ENCODE measurements at regions of chr11 and their contacts with region 1.

Region 1: GRCh38 chr11:125887373-125888324 is at the start of gene HYLS1:
- DNase-seq: peak; percentile 90 to 100 (median 94)
- ATAC-seq: peak; percentile 95
- H3K4me3 ChIP-seq: peak within 1 kb of the TSS; percentile 86
- H3K4me3 Mint-ChIP-seq: peak within 1 kb of the TSS; percentile 87 to 98 (median 96)
- H3K27ac ChIP-seq: peak within 1 kb of the TSS; percentile 71
- H3K27ac Mint-ChIP-seq: peak within 1 kb of the TSS; percentile 88 to 99 (median 97)
- H3K4me1 ChIP-seq: peaks cover 6% of the 10 kb centered on the region in 2 donors
- H3K4me1 Mint-ChIP-seq: peaks cover 20 to 57% (median 39%) of the 10 kb centered on the region in 7 donors
- H3K27me3 ChIP-seq: no peaks in the 10 kb centered on the region
- H3K27me3 Mint-ChIP-seq: peaks cover 0 to 4% (median 0%) of the 10 kb centered on the region in 5 donors
- total RNA-seq, gene HYLS1: 2.7 to 13.1 (median 8.0) TPM

Region 2: GRCh38 chr11:124746621-124747243 is 1140.9 kb before region 1 on chr11:
- CTCF ChIA-PET with region 1: no interaction called
- POLR2A ChIA-PET with region 1: no interaction called
- intact Hi-C with region 1: loop called in 1 of 2 experiments (anchors 5 kb)
- DNase-seq: peak; percentile 66 to 88 (median 85)
- ATAC-seq: peak; percentile 93
- H3K4me3 ChIP-seq: peak overlapping the region; percentile 99
- H3K4me3 Mint-ChIP-seq: peak overlapping the region; percentile 91 to 100 (median 98)
- H3K27ac ChIP-seq: peak overlapping the region; percentile 72
- H3K27ac Mint-ChIP-seq: peak overlapping the region; percentile 91 to 98 (median 96)
- H3K4me1 ChIP-seq: peaks cover 0 to 3% of the 10 kb centered on the region in 2 donors
- H3K4me1 Mint-ChIP-seq: peaks cover 4 to 37% (median 19%) of the 10 kb centered on the region in 7 donors
- H3K27me3 ChIP-seq: no peaks in the 10 kb centered on the region
- H3K27me3 Mint-ChIP-seq: peaks cover 0 to 22% (median 0%) of the 10 kb centered on the region in 5 donors

Region 3: GRCh38 chr11:124953753-124954589 is 933.7 kb before region 1 on chr11 and contains the start of gene CCDC15:
- CTCF ChIA-PET with region 1: no interaction called
- POLR2A ChIA-PET with region 1: interaction called, 3 read pairs
- intact Hi-C with region 1: loop called (anchors 5 kb)
- DNase-seq: peak; percentile 78 to 94 (median 92)
- ATAC-seq: peak; percentile 99
- H3K4me3 ChIP-seq: peak within 1 kb of the TSS; percentile 72
- H3K4me3 Mint-ChIP-seq: no peak within 1 kb of the TSS
- H3K27ac ChIP-seq: peak within 1 kb of the TSS; percentile 85
- H3K27ac Mint-ChIP-seq: no peak within 1 kb of the TSS
- H3K4me1 ChIP-seq: peaks cover 27 to 42% of the 10 kb centered on the region in 2 donors
- H3K4me1 Mint-ChIP-seq: peaks cover 0 to 7% (median 0%) of the 10 kb centered on the region in 7 donors
- H3K27me3 ChIP-seq: no peaks in the 10 kb centered on the region
- H3K27me3 Mint-ChIP-seq: no peaks in the 10 kb centered on the region
- total RNA-seq, gene CCDC15: 1.6 to 4.7 (median 2.7) TPM

Region 4: GRCh38 chr11:125592305-125593112 is 295.1 kb before region 1 on chr11 and contains the start of gene STT3A:
- CTCF ChIA-PET with region 1: no interaction called
- POLR2A ChIA-PET with region 1: interaction called, 10 read pairs
- intact Hi-C with region 1: loop called (anchors 1 kb)
- DNase-seq: peak; percentile 94 to 99 (median 99)
- ATAC-seq: peak; percentile 96
- H3K4me3 ChIP-seq: peak within 1 kb of the TSS; percentile 94
- H3K4me3 Mint-ChIP-seq: peak within 1 kb of the TSS; percentile 88 to 99 (median 96)
- H3K27ac ChIP-seq: peak within 1 kb of the TSS; percentile 95
- H3K27ac Mint-ChIP-seq: peak within 1 kb of the TSS; percentile 94 to 100 (median 99)
- H3K4me1 ChIP-seq: peaks cover 13% of the 10 kb centered on the region in 2 donors
- H3K4me1 Mint-ChIP-seq: peaks cover 30 to 62% (median 53%) of the 10 kb centered on the region in 7 donors
- H3K27me3 ChIP-seq: no peaks in the 10 kb centered on the region
- H3K27me3 Mint-ChIP-seq: no peaks in the 10 kb centered on the region
- total RNA-seq, gene STT3A: 39.6 to 153 (median 84.5) TPM

Region 5: DNA sequence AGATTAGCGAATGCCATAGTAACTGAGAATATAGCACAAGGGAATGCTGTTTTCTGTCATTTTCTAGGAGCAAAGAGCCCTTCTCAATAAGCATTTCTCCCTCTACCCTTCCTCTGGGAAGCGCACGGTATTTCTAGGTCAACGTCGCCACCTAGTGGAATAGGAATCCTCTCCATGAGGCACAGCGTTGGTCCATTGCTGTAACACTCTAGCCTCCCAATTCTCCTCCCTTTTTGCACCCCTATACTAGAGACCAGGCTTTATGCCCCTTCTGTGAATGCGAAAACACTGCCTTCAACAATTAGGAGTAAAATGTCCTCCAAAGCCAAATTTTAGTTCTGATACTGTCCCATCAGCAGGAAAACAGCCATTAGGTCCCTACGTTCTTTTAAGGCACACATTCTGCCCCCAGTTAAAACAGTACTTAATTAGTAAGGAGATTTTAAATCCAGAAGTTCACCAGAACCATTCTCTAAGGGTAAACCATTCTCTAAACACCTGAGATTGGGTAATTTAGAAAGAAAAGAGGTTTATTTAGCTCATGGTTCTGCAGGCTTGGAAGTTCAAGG is 13.0 kb before region 1 on chr11:
- CTCF ChIA-PET with region 1: no interaction called
- POLR2A ChIA-PET with region 1: no interaction called
- intact Hi-C with region 1: no loop called
- DNase-seq: peak in 7 of 9 donors; percentile 12 to 52 (median 34)
- ATAC-seq: peak; percentile 75
- H3K4me3 ChIP-seq: no peak overlapping the region
- H3K4me3 Mint-ChIP-seq: peak overlapping the region in 1 of 10 donors; percentile 17
- H3K27ac ChIP-seq: no peak overlapping the region
- H3K27ac Mint-ChIP-seq: no peak overlapping the region
- H3K4me1 ChIP-seq: no peaks in the 10 kb centered on the region
- H3K4me1 Mint-ChIP-seq: no peaks in the 10 kb centered on the region
- H3K27me3 ChIP-seq: no peaks in the 10 kb centered on the region
- H3K27me3 Mint-ChIP-seq: peaks cover 0 to 6% (median 0%) of the 10 kb centered on the region in 5 donors

Region 6: DNA sequence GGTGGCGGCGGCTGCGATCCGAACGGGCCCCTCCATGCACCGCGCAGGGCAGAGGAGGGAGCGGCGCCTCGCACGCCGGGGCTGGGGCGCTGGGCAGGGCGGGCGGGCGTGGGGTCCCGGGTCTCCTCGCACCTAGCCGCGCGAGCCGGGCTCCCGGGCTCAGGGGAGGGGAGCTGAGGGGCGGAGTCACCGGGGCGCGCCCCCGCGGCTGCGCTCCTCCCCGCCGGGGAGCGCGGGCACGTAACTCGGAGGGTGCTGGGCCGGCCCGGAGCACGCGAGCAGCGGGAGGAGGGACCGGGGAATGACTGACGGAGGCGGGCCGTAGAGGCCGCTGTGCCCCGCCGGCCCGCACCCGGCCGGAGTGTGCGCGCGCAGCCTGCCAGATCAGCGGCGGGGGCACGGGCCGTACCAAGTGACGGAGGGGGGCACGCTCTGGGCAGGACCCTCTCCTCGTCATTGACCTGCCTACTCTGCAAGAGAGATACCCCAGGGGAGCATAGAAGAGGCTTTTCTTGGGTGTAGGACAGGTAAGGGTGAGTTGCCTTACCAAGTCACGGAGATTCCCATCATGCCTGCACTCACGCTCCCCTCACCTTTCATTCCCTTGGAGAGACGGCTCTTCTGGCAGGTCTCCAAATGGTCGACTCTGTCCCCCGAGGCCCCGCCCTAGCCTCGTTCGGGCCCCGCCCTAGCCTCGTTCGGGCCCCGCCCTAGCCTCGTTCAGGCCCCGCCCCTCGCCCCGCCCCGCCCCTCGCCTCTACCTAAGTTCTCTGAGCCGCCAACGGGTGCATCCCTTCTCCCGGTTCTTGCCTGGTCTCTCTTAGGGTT is 175.2 kb after region 1 on chr11 and contains the start of gene CDON:
- CTCF ChIA-PET with region 1: no interaction called
- POLR2A ChIA-PET with region 1: interaction called, 3 read pairs
- intact Hi-C with region 1: loop called (anchors 1 kb)
- DNase-seq: peak; percentile 88 to 97 (median 93)
- ATAC-seq: peak; percentile 92
- H3K4me3 ChIP-seq: peak within 1 kb of the TSS; percentile 83
- H3K4me3 Mint-ChIP-seq: peak within 1 kb of the TSS; percentile 79 to 93 (median 92)
- H3K27ac ChIP-seq: peak within 1 kb of the TSS; percentile 76
- H3K27ac Mint-ChIP-seq: peak within 1 kb of the TSS; percentile 79 to 98 (median 97)
- H3K4me1 ChIP-seq: peaks cover 4 to 5% of the 10 kb centered on the region in 2 donors
- H3K4me1 Mint-ChIP-seq: peaks cover 5 to 17% (median 7%) of the 10 kb centered on the region in 7 donors
- H3K27me3 ChIP-seq: no peaks in the 10 kb centered on the region
- H3K27me3 Mint-ChIP-seq: peaks cover 0 to 56% (median 5%) of the 10 kb centered on the region in 5 donors
- total RNA-seq, gene CDON: 1.5 to 4.8 (median 2.3) TPM

Region 7: GRCh38 chr11:126303623-126304456 is 416.2 kb after region 1 on chr11 and contains the start of gene DCPS:
- CTCF ChIA-PET with region 1: no interaction called
- POLR2A ChIA-PET with region 1: no interaction called
- intact Hi-C with region 1: loop called in 1 of 2 experiments (anchors 1 kb)
- DNase-seq: peak; percentile 78 to 94 (median 86)
- ATAC-seq: peak; percentile 99
- H3K4me3 ChIP-seq: peak within 1 kb of the TSS; percentile 100
- H3K4me3 Mint-ChIP-seq: peak within 1 kb of the TSS; percentile 91 to 99 (median 97)
- H3K27ac ChIP-seq: peak within 1 kb of the TSS; percentile 97
- H3K27ac Mint-ChIP-seq: peak within 1 kb of the TSS; percentile 87 to 99 (median 96)
- H3K4me1 ChIP-seq: peaks cover 18 to 20% of the 10 kb centered on the region in 2 donors
- H3K4me1 Mint-ChIP-seq: peaks cover 19 to 50% (median 45%) of the 10 kb centered on the region in 7 donors
- H3K27me3 ChIP-seq: no peaks in the 10 kb centered on the region
- H3K27me3 Mint-ChIP-seq: no peaks in the 10 kb centered on the region
- total RNA-seq, gene DCPS: 11.0 to 37.2 (median 17.4) TPM

Measured in naive thymus-derived CD4-positive, alpha-beta T cell (primary cell).